ENCODE measurements at regions of chr21 and their contacts with region 1.

Region 1: DNA sequence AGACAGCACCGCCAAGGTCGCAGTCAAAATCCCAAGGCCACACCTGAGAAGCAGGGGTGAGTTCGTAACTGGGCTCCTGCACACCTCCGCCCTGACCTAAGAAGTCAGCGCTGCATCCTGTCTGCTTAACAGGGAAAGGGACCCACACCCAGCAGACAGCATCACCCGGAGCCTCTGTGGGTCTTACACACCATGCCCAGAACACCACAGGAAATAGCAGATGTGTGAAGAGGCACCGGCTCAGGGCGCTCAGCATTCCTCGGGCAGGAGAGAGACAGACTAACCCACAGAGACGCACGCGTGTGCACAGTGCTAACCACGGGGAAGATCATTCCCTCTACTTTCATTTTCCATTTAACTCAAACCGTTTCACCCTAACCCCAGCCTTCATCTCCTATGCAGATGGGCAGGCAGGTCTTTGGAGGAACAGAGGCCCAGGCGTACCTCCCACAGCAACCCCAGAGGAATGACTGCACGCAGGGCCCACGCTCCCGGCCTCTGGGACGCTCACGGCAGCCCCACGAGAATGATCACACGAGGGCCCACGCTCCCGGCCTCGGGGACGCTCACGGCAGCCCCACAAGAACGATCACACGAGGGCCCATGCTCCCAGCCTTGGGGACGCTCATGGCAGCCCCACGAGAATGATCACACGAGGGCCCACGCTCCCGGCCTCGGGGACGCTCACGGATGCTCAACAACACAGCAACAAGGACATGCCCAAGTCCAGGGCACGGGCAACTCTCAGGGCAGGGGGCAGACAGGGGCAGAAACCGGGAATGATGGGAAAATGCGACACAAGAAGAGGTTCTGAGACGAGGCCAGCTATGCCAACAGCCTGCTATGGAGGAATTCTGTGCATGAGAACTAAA is 20.9 kb downstream of the POFUT2 start:
- DNase-seq: peak; percentile 16 to 46
- H3K4me3 ChIP-seq: no peak overlapping the region
- H3K27ac ChIP-seq: no peak overlapping the region
- H3K4me1 ChIP-seq: no peaks in the 10 kb centered on the region
- H3K27me3 ChIP-seq: no peaks in the 10 kb centered on the region
- CTCF ChIP-seq: no peak
- POLR2A ChIP-seq: no peak

Region 2: DNA sequence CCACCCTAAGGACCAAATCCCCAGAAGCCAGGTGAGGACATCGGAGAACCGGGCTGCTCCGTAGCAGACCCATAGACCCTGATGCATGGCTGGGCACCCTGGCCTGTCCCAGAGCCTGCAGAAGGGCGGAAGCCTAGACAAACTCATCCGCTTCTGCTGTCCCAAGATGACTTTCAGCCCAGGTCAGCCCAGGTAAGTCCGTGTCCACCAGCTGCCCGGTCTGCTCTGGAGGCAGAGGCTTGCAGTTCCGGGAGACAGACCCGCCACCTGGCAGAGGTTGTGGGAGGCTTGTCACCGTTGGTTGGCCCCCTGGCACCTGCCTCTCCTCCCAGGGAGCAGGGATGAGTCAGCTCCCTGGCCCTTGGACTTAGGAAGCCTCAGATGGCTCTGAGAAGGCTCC is 43.7 kb after region 1 on chr21:
- intact Hi-C with region 1: loop called (anchors 2 kb)
- DNase-seq: no peak
- H3K4me3 ChIP-seq: no peak overlapping the region
- H3K27ac ChIP-seq: no peak overlapping the region
- H3K4me1 ChIP-seq: peaks cover 3 to 5% of the 10 kb centered on the region in 2 donors
- H3K27me3 ChIP-seq: no peaks in the 10 kb centered on the region
- CTCF ChIP-seq: no peak
- POLR2A ChIP-seq: no peak

Measured in breast epithelium (tissue), 4 donors.